ENCODE measurements at regions of chr9 and their contacts with region 1.

Region 1: GRCh38 chr9:98929071-98929470 is 14.6 kb upstream of the COL15A1 start:
- DNase-seq: no peak
- H3K4me3 ChIP-seq: no peak overlapping the region
- H3K27ac ChIP-seq: peak overlapping the region in 1 of 2 donors; percentile 72
- H3K4me1 ChIP-seq: peaks cover 8% of the 10 kb centered on the region
- H3K27me3 ChIP-seq: no peaks in the 10 kb centered on the region
- CTCF ChIP-seq: no peak
- EP300 ChIP-seq: no peak
- POLR2A ChIP-seq: no peak

Region 2: DNA sequence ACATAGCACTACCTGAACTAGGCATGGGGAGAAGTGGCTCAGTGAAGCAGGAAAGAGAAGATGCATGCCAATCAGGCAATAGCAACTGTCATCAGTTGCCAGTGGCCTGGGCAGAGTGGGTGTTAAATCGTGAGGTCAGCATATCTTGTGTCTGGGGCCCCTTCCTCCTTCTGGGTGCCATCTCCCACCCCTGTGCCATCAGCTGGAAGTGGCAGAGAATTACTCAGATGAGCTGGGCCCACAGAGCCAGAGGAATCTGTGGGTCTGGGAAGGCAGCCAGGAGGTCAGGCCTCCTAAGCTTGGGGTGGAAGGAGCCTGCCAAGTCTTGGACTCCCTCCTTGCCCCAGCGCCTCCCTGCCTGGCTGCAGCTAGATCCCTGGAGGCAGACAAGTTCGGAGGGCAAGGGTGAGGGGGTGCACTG is 55.1 kb before region 1 on chr9:
- intact Hi-C with region 1: loop called in 2 of 4 experiments (anchors 5 to 10 kb)
- DNase-seq: peak in 4 of 5 donors; percentile 59 to 86 (median 70)
- H3K4me3 ChIP-seq: no peak overlapping the region
- H3K27ac ChIP-seq: no peak overlapping the region
- H3K4me1 ChIP-seq: peaks cover 5% of the 10 kb centered on the region
- H3K27me3 ChIP-seq: no peaks in the 10 kb centered on the region
- CTCF ChIP-seq: no peak
- EP300 ChIP-seq: no peak
- POLR2A ChIP-seq: no peak

Region 3: GRCh38 chr9:98881836-98882568 is 47.1 kb before region 1 on chr9:
- intact Hi-C with region 1: loop called in 1 of 4 experiments (anchors 5 kb)
- DNase-seq: no peak
- H3K4me3 ChIP-seq: no peak overlapping the region
- H3K27ac ChIP-seq: peak overlapping the region in 1 of 2 donors; percentile 30
- H3K4me1 ChIP-seq: peaks cover 32% of the 10 kb centered on the region
- H3K27me3 ChIP-seq: no peaks in the 10 kb centered on the region
- CTCF ChIP-seq: no peak
- EP300 ChIP-seq: no peak
- POLR2A ChIP-seq: no peak

Region 4: DNA sequence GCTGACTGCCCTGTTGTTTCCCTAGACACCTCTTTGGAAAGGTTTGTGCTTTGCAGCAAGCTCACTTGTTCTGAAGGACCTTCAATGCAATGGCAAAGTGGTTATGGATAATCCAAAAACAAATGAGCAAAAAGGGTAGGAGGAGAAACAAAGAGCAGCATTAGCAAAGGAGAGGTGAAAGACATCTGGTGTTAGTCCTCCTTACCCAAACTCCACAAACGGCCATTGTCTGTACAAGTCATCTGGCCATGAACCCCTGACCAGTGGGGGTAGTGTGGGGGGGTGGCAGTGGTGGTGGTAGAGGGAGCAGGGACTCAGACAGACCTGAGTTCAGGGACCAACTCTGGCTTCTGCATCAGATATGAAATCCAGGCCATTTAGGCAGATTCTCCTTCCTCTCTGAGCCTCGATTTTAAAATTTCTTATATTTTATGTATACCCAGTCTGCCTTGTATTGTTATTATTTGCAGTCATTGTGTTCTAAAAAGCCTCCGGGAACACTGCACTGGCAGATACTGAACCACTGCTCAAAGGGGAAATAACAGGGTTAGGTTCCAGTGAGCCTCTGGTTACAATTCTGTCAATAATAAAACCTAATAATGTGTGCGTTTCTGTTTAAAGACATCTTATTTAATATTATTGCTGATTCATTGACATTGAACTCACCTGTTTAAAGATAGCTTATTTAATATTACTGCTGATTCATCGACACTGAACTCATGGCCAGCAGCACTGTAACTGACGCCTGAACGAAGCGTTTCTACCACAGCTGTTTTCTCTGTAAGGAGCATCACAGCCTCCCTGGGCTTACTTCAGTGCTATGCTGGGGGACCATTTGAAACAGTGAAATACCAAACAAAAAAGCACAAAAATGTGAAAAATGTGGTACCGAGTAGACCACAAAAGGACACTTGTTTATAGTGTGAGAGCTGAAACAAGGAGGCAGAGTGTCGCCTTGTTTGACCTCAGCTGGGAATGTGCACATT is 449.0 kb after region 1 on chr9:
- intact Hi-C with region 1: no loop called
- DNase-seq: no peak
- H3K4me3 ChIP-seq: no peak overlapping the region
- H3K27ac ChIP-seq: no peak overlapping the region
- H3K4me1 ChIP-seq: no peaks in the 10 kb centered on the region
- H3K27me3 ChIP-seq: no peaks in the 10 kb centered on the region
- CTCF ChIP-seq: no peak
- EP300 ChIP-seq: no peak
- POLR2A ChIP-seq: no peak

Measured in ovary (tissue), 10 donors.